HepG2 (cell line): ENCODE measurements at regions of chr14 and their contacts with region 1.

Region 1: GRCh38 chr14:35046048-35046741 is at the start of gene FAM177A1:
- DNase-seq: peak; percentile 99
- ATAC-seq: peak; percentile 97
- H3K4me3 ChIP-seq: peak within 1 kb of the TSS; percentile 81 to 96 (median 90)
- H3K27ac ChIP-seq: peak within 1 kb of the TSS; percentile 82
- H3K4me1 ChIP-seq: peaks cover 52% of the 10 kb centered on the region
- H3K27me3 ChIP-seq: no peaks in the 10 kb centered on the region; a peak in 1 of 5 replicates
- CTCF ChIP-seq: peak; percentile 48
- EP300 ChIP-seq: peak in 1 of 2 experiments; percentile 44; a peak in 2 of 4 replicates
- POLR2A ChIP-seq: peak; percentile 93 to 96
- RAD21 ChIP-seq: peak; percentile 72
- total RNA-seq, gene FAM177A1: 116 and 119 TPM in 2 replicates

Region 2: GRCh38 chr14:34875031-34875922 is 170.9 kb before region 1 on chr14 and contains the start of gene BAZ1A:
- CTCF ChIA-PET with region 1: no interaction called
- POLR2A ChIA-PET with region 1: interaction called, 10 read pairs
- in situ Hi-C with region 1: no loop called
- intact Hi-C with region 1: no loop called
- DNase-seq: peak; percentile 93
- ATAC-seq: peak; percentile 46
- H3K4me3 ChIP-seq: peak within 1 kb of the TSS; percentile 82 to 89 (median 87)
- H3K27ac ChIP-seq: peak within 1 kb of the TSS; percentile 85
- H3K4me1 ChIP-seq: peaks cover 34% of the 10 kb centered on the region
- H3K27me3 ChIP-seq: no peaks in the 10 kb centered on the region; a peak in 1 of 5 replicates
- CTCF ChIP-seq: peak; percentile 37; the same call in 1 of the 2 replicates
- EP300 ChIP-seq: no peak
- POLR2A ChIP-seq: peak in 1 of 2 experiments; percentile 93; a peak in 2 of 4 replicates
- RAD21 ChIP-seq: no peak; the same call in none of the 2 replicates
- total RNA-seq, gene BAZ1A: 56.8 and 68.3 TPM in 2 replicates

Region 3: DNA sequence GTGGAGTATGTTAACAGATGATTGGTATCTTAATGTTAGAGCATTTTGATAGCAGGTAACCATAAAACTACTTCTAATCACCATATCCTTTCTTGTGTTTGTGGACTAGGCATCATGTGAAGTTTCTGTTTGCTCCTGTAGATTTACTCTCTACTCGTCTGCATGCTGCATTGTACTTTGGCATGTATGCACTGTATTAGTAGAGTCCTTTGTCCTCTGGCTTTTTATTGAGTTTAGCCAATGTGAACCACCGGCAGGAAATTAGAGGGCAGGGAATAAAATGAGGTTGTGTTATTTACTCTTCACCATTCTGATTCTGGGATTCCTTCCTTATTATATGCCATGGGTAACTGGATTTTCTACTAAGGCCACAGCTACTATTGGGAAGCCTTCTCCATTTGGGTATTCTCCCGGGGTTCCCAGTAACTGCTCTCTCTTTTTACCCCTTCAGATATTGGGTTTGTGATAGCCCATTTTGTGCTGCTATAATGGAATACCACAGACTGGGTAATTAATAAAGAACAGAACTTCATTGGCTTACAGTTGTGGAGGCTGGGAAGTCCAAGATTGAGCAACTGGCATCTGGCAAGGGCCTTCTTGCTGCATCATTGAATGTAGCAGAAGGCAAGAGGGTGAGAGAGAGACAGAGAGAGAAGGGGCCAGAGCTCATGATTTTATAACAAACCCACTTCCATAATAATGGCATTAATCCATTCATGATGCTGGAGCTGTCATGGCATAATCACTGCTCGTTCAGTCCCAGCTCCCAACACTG is 22.2 kb after region 1 on chr14:
- CTCF ChIA-PET with region 1: no interaction called
- POLR2A ChIA-PET with region 1: interaction called, 11 read pairs
- in situ Hi-C with region 1: no loop called
- intact Hi-C with region 1: no loop called
- DNase-seq: no peak
- ATAC-seq: peak; percentile 76
- H3K4me3 ChIP-seq: no peak overlapping the region
- H3K27ac ChIP-seq: no peak overlapping the region
- H3K4me1 ChIP-seq: peaks cover 9% of the 10 kb centered on the region; the same call in 1 of the 2 replicates
- H3K27me3 ChIP-seq: no peaks in the 10 kb centered on the region
- CTCF ChIP-seq: no peak
- EP300 ChIP-seq: no peak
- POLR2A ChIP-seq: no peak
- RAD21 ChIP-seq: no peak

Region 4: DNA sequence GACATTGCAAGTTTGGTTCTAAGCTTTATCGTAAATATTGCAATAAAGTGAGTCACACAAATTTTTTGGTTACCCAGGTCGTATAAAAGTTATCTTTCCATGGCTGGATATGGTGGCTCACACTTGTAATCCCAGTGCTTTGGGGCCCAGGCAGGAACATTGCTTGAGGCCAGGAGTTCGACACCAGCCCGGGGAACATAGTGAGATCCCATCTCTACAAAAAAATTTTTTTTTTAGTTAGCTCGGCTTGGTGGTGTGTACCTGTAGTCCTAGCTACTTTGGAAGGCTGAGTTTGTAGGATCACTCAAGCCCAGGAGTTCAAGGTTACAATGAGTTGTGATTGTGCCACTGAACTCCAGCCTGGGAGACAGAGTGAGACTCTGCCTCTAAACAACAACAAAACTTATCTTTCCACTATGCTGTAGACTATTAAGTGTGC is 100.5 kb after region 1 on chr14:
- CTCF ChIA-PET with region 1: no interaction called
- POLR2A ChIA-PET with region 1: no interaction called
- in situ Hi-C with region 1: no loop called
- intact Hi-C with region 1: no loop called
- DNase-seq: peak; percentile 72
- ATAC-seq: peak; percentile 84
- H3K4me3 ChIP-seq: no peak overlapping the region
- H3K27ac ChIP-seq: peak overlapping the region; percentile 3
- H3K4me1 ChIP-seq: peaks cover 33% of the 10 kb centered on the region
- H3K27me3 ChIP-seq: no peaks in the 10 kb centered on the region
- CTCF ChIP-seq: no peak
- EP300 ChIP-seq: no peak
- POLR2A ChIP-seq: no peak
- RAD21 ChIP-seq: no peak

Region 5: GRCh38 chr14:35341446-35342159 is 295.4 kb after region 1 on chr14:
- CTCF ChIA-PET with region 1: no interaction called
- POLR2A ChIA-PET with region 1: no interaction called
- in situ Hi-C with region 1: no loop called
- intact Hi-C with region 1: loop called (anchors 1 kb)
- DNase-seq: peak; percentile 91
- ATAC-seq: peak; percentile 85
- H3K4me3 ChIP-seq: peak overlapping the region; percentile 63 to 78 (median 64)
- H3K27ac ChIP-seq: no peak overlapping the region
- H3K4me1 ChIP-seq: peaks cover 90% of the 10 kb centered on the region
- H3K27me3 ChIP-seq: peaks cover 0 to 3% of the 10 kb centered on the region in 2 experiments; a peak in 2 of 5 replicates
- CTCF ChIP-seq: no peak; the same call in 1 of the 2 replicates
- EP300 ChIP-seq: no peak; a peak in 1 of 4 replicates
- POLR2A ChIP-seq: peak in 1 of 2 experiments; percentile 62; a peak in 2 of 4 replicates
- RAD21 ChIP-seq: 0 out of 2 replicates have a peak, but pooled peaks have one; percentile 31

Region 6: GRCh38 chr14:35808076-35808652 is 762.0 kb after region 1 on chr14:
- CTCF ChIA-PET with region 1: no interaction called
- POLR2A ChIA-PET with region 1: interaction called, 3 read pairs
- in situ Hi-C with region 1: no loop called
- intact Hi-C with region 1: loop called (anchors 10 kb)
- DNase-seq: no peak
- ATAC-seq: no peak
- H3K4me3 ChIP-seq: peak overlapping the region; percentile 85 to 96 (median 86)
- H3K27ac ChIP-seq: peak overlapping the region; percentile 89
- H3K4me1 ChIP-seq: peaks cover 58% of the 10 kb centered on the region
- H3K27me3 ChIP-seq: no peaks in the 10 kb centered on the region; a peak in 1 of 5 replicates
- CTCF ChIP-seq: no peak
- EP300 ChIP-seq: no peak
- POLR2A ChIP-seq: no peak; a peak in 1 of 4 replicates
- RAD21 ChIP-seq: 0 out of 2 replicates have a peak, but pooled peaks have one; percentile 15